ENCODE measurements at regions of chrX and their contacts with region 1.

Region 1: DNA sequence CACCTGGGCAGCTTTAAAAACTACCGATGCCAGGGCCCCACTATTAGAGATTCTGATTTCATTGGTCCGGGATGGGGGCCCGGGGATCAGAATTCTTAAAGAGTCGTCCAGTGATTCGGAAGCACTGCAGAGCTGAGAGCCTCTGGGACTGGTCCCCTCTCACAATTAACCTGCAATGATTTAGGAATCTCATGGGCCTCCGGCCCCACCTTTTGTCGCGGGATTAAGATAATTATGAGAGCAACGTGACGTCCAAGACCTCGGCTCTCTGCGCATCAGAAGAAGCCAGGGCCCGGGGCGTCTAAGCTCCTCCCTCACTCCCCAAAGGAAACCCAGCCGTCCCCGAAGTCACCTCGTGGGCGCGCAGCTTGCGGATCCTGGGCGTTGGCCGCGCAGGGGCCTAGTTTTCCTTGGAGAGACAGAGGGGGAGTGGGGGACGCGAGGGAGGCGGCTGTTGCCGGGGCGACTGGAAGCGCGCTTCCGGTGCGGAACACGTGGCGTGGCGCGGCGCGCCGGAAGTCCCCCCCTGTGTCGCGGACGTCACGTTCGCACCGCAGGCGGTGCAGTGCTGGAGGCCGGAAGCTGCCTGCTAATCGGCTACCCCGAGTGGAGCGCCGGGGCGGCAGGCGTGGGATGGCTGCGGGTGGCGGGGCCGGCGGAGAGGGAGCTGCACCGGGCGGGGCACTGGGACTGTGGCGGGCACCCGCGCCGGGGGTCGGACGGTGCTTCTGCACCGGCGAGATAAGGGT is at the start of gene GEMIN8:
- DNase-seq: peak; percentile 95
- H3K4me3 Mint-ChIP-seq: peak within 1 kb of the TSS; percentile 99
- H3K27ac Mint-ChIP-seq: peak within 1 kb of the TSS; percentile 100
- H3K4me1 Mint-ChIP-seq: peaks cover 25% of the 10 kb centered on the region
- H3K27me3 Mint-ChIP-seq: peaks cover 6% of the 10 kb centered on the region
- total RNA-seq, gene GEMIN8: 16.3 and 17.1 TPM in 2 replicates

Region 2: DNA sequence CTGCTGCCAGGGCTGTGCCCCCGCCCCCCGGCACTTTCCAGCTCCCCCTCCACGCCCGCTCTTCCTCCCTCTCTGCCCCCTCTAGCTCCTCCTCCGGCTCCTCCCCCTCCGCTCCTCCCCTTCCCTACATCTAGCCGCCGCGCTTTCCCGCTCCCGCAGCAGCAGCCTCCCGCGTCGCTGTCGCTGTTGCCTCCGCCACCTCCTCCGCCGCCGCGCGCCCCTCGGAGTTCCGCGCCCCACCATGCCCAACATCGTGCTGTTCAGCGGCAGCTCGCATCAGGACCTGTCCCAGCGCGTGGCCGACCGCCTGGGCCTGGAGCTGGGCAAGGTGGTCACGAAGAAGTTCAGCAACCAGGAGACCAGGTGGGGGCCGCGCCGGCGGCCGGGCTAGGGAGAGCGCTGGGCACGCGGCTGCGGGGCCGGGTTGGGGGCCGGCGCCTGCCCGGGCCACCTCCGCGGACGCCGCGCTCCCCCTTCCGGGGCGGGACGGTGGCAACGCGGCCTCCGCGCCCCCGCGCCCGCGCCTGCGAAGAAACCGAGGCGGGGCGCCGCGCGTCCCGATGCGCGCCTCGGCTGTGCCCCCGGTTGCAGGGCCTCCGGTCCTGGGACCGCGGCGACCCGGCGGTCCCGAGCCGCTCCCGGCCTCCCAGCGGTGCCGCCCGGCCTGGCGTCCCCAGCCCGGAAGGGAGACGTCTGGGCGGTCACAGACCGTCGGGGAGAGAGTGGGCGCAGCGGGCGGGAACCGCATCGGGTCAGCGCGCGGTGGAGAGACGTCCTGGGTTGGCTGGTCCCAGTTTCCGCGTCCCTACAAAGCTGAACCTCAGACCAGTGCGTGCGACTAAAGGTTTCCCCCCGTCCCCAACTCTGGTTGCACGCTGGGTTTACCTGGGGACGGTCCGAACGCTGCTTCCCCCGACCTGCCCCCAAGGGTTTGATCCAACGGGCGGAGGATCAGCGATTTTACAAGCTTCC is 1238.1 kb before region 1 on chrX and contains the start of gene PRPS2:
- intact Hi-C with region 1: loop called (anchors 5 kb)
- DNase-seq: peak; percentile 92
- H3K4me3 Mint-ChIP-seq: peak within 1 kb of the TSS; percentile 87
- H3K27ac Mint-ChIP-seq: peak within 1 kb of the TSS; percentile 85
- H3K4me1 Mint-ChIP-seq: peaks cover 34% of the 10 kb centered on the region
- H3K27me3 Mint-ChIP-seq: peaks cover 8% of the 10 kb centered on the region
- total RNA-seq, gene PRPS2: 111 and 115 TPM in 2 replicates

Region 3: DNA sequence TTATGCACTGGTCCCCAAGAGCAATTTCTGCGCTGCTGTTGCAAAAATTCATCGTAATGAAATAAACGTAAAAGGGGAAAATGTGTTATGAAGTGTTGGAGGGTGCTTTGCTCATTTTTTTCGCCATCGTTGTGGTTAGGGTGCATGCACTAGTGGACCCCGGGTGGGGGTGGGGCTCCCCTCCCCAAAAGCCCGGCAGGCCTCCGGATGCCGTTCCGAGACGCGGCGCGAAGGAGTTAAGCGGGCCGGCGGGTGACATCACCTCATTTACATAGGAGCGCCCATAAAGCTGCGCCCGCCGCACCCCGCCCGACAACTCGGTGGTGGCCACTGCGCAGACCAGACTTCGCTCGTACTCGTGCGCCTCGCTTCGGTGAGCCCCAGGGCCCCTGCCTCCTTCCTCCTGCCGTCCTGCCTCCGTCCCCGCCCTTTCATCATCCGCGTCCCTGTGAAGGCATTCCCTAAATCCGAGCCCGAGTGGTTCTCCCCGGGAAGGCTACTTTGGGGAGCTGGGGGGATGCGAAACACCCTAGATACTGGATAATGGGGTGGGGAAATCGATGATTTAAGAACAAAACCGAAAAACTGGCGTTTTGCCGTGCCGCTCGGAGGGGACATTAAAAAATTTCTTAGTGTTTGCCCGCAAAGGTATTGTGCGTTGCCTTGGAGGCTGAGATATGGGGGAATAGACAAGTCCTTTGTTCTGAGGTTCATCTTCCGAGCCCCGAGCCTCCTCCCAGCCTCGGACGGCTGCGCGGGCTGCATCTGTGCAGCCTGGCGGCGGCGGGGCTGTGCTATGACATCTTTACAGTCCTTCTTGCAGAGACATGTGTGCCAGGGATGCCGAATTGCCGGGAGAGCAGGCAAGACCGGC is 1054.6 kb before region 1 on chrX and contains the start of gene TMSB4X:
- intact Hi-C with region 1: loop called (anchors 10 kb)
- DNase-seq: peak; percentile 96
- H3K4me3 Mint-ChIP-seq: peak within 1 kb of the TSS; percentile 97
- H3K27ac Mint-ChIP-seq: peak within 1 kb of the TSS; percentile 98
- H3K4me1 Mint-ChIP-seq: peaks cover 32% of the 10 kb centered on the region
- H3K27me3 Mint-ChIP-seq: no peaks in the 10 kb centered on the region
- total RNA-seq, gene TMSB4X: 5,263 and 5,311 TPM in 2 replicates

Region 4: GRCh38 chrX:13653022-13653693 is 376.4 kb before region 1 on chrX and contains the start of gene TCEANC:
- intact Hi-C with region 1: loop called (anchors 1 kb)
- DNase-seq: peak; percentile 97
- H3K4me3 Mint-ChIP-seq: peak within 1 kb of the TSS; percentile 90
- H3K27ac Mint-ChIP-seq: peak within 1 kb of the TSS; percentile 94
- H3K4me1 Mint-ChIP-seq: peaks cover 13% of the 10 kb centered on the region
- H3K27me3 Mint-ChIP-seq: no peaks in the 10 kb centered on the region
- total RNA-seq, gene TCEANC: 3.0 and 4.2 TPM in 2 replicates

Region 5: DNA sequence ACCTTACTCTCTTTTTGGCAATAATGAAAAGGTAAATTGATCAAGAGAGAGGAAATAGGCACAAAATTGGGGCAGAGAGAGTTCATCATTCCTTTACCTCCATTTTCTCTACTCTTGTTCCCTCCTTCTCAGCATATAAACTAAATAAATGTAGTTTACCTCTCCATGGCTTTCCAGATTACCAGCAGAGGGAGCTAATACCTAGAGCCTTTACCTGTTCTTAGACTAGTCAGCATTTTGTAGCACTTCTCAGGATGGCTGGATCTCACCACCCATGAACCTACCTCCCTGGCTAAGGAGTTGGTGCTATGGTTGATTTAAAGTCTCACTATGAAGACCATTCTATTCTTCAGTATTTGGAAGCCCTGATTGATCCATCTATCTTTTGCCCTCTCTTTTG is 279.4 kb before region 1 on chrX:
- intact Hi-C with region 1: loop called (anchors 1 kb)
- DNase-seq: peak; percentile 69
- H3K4me3 Mint-ChIP-seq: no peak overlapping the region
- H3K27ac Mint-ChIP-seq: no peak overlapping the region
- H3K4me1 Mint-ChIP-seq: peaks cover 17% of the 10 kb centered on the region
- H3K27me3 Mint-ChIP-seq: no peaks in the 10 kb centered on the region

Region 6: DNA sequence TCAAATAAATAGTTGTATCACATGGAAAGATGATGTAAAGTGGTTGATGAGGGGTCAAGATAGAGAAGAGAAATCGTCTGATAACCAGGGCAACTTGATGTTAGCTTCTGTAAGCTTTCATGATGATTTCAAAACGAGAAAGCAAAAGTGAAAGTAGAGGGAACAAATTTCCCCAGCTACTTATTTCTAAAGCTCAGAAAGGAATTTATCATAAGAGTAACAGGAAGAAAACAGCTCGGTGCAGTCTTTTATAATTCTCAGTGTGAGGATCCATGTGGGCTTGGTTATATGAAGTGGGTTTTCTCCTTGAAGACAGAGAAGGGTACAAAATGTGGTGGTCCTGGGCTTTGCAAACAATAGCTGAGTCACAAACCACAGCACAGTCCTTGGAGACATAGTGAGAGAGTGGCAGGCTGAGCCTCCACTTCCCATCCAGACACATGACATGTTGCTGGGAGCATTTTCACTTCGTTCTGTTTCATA is 467.6 kb after region 1 on chrX:
- intact Hi-C with region 1: loop called (anchors 10 kb)
- DNase-seq: peak; percentile 64
- H3K4me3 Mint-ChIP-seq: peak overlapping the region; percentile 66
- H3K27ac Mint-ChIP-seq: peak overlapping the region; percentile 87
- H3K4me1 Mint-ChIP-seq: peaks cover 3% of the 10 kb centered on the region
- H3K27me3 Mint-ChIP-seq: peaks cover 1% of the 10 kb centered on the region

Region 7: DNA sequence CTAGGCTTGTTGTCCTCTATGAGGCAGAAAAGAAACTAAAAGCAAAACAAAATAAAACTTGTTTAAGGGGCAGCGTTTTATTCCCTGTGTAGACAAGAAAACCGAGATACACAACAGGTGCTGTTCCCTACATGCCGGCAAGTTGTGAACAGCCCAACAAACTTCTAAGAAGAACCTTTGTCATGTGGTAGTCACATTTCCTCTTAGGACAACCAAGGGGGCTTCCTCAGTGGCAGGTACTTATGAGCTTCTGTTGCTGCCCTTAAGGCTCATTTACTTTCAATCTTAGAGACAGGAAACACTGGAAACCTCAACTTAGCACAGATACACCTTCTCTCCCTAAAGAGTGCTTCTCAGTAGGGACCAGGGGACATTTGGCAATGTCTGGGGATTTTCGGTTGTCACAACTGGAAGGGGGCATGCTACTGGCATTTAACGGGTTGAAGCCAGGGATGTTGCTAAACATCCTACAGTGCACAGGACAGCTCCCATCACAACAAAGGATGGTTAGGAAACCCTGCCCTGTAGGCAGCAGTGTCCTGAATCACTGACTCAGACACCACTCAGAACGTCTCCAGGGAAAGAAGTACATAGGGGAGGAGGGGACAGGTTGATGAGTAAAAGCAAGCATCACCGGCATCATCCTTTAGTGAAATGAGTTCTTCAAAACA is 1129.3 kb after region 1 on chrX:
- intact Hi-C with region 1: loop called (anchors 5 kb)
- DNase-seq: peak; percentile 80
- H3K4me3 Mint-ChIP-seq: peak overlapping the region; percentile 85
- H3K27ac Mint-ChIP-seq: peak overlapping the region; percentile 91
- H3K4me1 Mint-ChIP-seq: peaks cover 25% of the 10 kb centered on the region
- H3K27me3 Mint-ChIP-seq: no peaks in the 10 kb centered on the region

Measured in activated CD4-positive, alpha-beta T cell treated with anti-CD3 and anti-CD28 coated beads, Interleukin-2, amount 10 ng/mL, durations not matched to agents 24 days and 14 days (primary cell).